SK-N-SH (cell line): ENCODE measurements at regions of chr9 and their contacts with region 1.

Region 1: DNA sequence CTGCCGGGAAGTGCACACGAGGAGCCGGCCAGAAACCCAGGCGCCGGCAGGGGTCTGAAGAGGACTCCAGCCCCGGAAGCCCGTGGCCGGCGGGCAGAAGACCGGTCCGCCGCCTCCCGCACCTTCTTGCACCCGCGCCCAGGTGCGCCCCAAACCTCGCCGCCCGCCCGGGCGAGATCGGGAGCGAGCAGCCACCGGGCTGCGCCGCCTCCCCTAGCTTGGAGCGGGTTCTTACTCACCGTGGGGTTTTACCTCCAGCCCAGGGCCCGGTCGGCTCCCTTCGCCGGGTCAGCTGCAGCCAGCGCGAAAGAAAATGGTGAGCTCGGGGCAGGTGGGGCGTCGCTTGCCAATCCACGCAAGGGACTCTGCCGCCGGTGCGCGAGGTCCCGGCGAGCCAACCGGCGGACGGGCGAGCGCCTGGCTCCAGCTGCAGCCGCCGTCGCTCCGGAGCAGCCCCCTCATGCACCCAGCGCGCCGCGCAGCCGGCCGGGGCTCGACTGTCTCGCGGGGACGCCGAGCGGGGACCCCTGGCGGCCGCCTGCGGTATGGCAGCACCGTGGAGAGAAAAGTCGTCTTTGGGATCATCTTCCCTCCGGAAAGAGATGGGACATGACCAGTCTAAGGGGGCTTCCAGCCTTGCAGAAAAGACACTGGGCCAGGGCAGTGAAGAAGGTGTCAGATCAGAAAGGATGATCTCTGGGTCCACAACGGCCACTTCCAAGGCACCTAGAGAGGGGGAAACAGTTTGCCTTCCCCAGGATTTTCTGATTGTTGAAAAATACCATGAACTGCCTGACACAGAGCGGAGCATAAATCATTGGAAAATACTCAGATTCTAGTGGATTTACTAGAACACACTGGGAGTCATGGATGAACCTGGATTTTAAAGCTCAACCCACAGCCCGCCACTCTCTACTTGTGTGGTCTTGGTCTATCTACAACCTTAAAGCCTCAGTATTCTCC is at the start of gene MOB3B:
- DNase-seq: peak; percentile 93
- H3K4me3 ChIP-seq: peak within 1 kb of the TSS; percentile 72 to 75
- H3K27ac ChIP-seq: no peak within 1 kb of the TSS; a peak in 1 of 4 replicates
- H3K4me1 ChIP-seq: peaks cover 0 to 8% of the 10 kb centered on the region in 2 experiments; a peak in 2 of 4 replicates
- H3K27me3 ChIP-seq: no peaks in the 10 kb centered on the region
- CTCF ChIP-seq: peak; percentile 82
- EP300 ChIP-seq: no peak
- RAD21 ChIP-seq: peak; percentile 76
- polyA plus RNA-seq, gene MOB3B: 0.90 and 1.2 TPM in 2 replicates

Region 2: DNA sequence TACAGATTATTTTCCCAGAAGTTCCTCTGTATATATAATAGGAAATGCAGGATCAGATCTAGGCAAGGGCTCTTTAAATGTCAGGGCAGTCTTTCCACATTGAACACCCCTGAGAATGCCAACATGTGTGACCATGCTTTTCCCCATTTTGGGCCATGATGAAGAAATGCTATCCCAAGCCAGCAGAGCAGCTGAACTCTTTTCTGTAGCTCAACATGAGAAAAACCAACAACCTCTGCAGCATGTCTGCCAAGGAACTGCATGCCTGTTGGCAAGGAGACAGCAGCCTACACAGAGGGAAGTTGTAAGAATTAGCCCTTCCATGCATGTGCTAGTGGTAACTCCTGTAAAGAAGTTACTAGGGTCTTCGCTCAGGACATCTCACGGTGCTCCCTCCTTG is 15.0 kb before region 1 on chr9:
- CTCF ChIA-PET with region 1: interaction called, 13 read pairs
- POLR2A ChIA-PET with region 1: no interaction called
- DNase-seq: no peak
- H3K4me3 ChIP-seq: no peak overlapping the region
- H3K27ac ChIP-seq: no peak overlapping the region
- H3K4me1 ChIP-seq: no peaks in the 10 kb centered on the region; a peak in 1 of 4 replicates
- H3K27me3 ChIP-seq: no peaks in the 10 kb centered on the region
- CTCF ChIP-seq: no peak
- EP300 ChIP-seq: no peak
- RAD21 ChIP-seq: no peak

Region 3: DNA sequence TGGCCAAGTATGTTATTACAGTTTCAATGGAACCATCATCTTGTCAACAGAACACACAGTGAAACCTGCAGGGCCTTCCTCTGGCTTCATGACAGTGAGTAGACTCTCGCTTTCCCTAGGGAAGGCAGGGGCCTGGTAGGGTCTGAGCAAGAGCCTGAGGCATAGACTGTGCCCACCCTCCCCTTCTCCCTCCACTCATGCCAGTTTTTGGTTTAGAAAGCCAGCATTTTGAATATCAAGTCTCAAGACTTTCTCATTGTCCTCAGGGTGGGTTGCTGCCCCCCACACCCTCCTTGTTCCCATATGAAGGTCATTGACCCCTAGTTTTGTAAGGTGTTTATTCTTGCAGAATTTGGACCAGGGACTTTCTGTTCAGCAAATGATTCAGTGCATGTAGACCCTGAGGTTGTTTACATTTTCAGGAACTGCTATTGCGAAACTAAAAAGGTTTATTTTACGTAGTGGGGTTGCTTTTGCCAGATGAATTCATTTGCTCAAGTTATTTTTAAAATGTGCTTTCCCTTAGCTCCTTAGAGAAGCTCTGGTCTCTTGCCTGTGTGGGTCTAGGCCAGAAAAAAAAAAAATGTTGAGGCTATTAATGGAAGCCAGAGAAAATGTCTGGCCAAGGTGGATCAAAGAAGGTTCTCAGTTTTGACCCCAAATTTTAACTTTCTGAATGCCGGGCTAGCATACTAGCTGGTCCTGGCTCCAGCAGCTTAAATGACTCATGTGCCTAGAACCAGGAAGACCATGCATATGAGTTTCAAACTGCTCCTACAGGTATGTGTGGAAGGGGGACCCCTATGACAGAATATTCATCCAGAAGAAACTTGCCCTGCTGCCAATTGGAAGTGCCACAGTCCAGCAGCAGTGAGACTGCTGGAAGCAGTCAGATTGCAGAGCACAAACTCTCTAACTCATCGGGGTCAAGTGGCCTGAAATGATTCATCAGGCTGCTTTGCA is 10.2 kb after region 1 on chr9:
- CTCF ChIA-PET with region 1: interaction called, 26 read pairs
- POLR2A ChIA-PET with region 1: no interaction called
- DNase-seq: no peak
- H3K4me3 ChIP-seq: no peak overlapping the region
- H3K27ac ChIP-seq: no peak overlapping the region
- H3K4me1 ChIP-seq: peaks cover 0 to 5% of the 10 kb centered on the region in 2 experiments; a peak in 2 of 4 replicates
- H3K27me3 ChIP-seq: no peaks in the 10 kb centered on the region
- CTCF ChIP-seq: no peak
- EP300 ChIP-seq: no peak
- RAD21 ChIP-seq: no peak